GM23248 (cell line): ENCODE measurements at regions of chr22 and their contacts with region 1.

Region 1: GRCh38 chr22:26325641-26326040 is 103.4 kb upstream of the ASPHD2 start:
- DNase-seq: peak; percentile 62
- H3K4me3 ChIP-seq: no peak overlapping the region
- H3K27ac ChIP-seq: no peak overlapping the region
- H3K4me1 ChIP-seq: peaks cover 27% of the 10 kb centered on the region
- H3K27me3 ChIP-seq: no peaks in the 10 kb centered on the region

Region 2: DNA sequence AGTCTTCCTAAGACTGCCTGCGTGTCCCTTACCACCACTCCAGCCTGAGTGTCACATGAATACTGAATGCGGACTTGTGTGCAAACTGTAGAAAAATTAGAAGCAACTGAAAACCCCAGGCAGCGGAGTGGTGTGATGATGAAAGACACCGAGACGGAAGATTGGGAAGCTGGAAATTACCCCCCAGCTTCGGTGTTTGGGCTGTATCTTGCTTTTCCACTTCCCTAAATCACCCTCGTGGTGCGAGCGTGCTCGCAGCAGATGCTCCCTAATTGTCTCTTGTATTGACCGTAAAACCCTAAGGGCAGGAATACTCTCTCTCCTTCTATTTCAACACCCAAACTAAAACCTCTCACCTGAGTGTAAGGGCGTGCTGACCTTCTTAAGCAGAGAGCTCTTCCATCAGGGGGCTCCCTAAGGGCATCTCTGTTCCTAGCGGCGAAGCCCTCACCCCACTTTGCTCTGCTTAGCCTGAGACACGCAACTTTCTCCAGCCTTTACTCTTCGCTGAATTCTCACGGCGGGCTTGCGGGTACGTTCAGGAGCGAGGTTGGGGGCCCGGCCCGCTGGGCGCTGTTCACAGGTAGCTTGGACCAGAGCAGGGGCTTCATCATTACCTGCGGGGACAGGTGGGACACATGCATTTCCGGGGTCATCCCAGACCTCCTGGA is 1043.8 kb before region 1 on chr22:
- in situ Hi-C with region 1: no loop called
- DNase-seq: no peak
- H3K4me3 ChIP-seq: no peak overlapping the region
- H3K27ac ChIP-seq: no peak overlapping the region
- H3K4me1 ChIP-seq: no peaks in the 10 kb centered on the region
- H3K27me3 ChIP-seq: peaks cover 63% of the 10 kb centered on the region

Region 3: DNA sequence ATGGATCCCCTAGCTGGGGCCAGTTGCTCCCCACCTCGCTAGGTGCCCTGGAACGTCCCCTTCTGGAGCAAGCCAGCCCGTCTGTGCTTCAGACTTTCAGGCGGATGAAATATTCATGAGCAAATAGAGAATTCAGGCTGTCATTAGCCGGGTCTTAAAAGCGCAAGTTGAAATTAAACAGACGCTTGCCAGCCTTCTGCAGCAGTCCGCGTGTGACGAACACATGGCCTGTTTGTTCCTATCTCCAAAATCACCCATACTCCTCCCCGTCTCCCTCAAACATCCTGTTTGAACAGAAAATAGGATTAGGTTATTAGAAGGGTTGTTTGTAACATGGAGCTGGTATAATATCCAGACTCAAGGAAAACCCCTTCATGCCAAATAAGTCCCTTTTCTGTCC is 545.0 kb before region 1 on chr22:
- in situ Hi-C with region 1: loop called (anchors 5 kb)
- DNase-seq: no peak
- H3K4me3 ChIP-seq: no peak overlapping the region
- H3K27ac ChIP-seq: no peak overlapping the region
- H3K4me1 ChIP-seq: no peaks in the 10 kb centered on the region
- H3K27me3 ChIP-seq: no peaks in the 10 kb centered on the region

Region 4: GRCh38 chr22:26134654-26135330 is 190.8 kb before region 1 on chr22:
- in situ Hi-C with region 1: no loop called
- DNase-seq: no peak
- H3K4me3 ChIP-seq: no peak overlapping the region
- H3K27ac ChIP-seq: no peak overlapping the region
- H3K4me1 ChIP-seq: no peaks in the 10 kb centered on the region
- H3K27me3 ChIP-seq: no peaks in the 10 kb centered on the region